OCI-LY7 (cell line): ENCODE measurements at regions of chrX and their contacts with region 1.

Region 1: DNA sequence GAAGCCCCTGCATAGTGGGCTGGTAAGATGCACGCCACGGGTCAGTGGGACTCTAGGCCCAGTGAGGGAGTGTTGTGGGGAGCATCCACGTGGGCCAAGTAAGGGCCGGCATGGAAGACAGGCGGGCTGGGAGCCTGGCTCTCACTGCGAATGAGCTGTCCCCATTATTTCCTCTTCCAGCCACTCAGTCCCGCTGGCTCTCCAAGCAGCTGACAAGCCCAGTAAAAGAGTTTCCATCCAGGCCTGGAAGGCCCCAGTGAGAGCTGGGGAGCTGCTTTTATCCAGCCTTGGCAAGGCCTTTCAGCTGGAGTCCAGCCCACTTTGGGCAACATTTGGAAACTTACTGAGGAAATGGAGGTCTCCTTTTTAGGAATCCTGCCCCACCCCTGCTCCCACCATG is 24.9 kb downstream of the APLN start:
- DNase-seq: no peak
- H3K4me3 ChIP-seq: no peak overlapping the region
- H3K27ac ChIP-seq: no peak overlapping the region
- H3K4me1 ChIP-seq: no peaks in the 10 kb centered on the region
- CTCF ChIP-seq: no peak

Region 2: GRCh38 chrX:129614481-129615255 is 15.2 kb before region 1 on chrX:
- CTCF ChIA-PET with region 1: no interaction called
- POLR2A ChIA-PET with region 1: no interaction called
- intact Hi-C with region 1: loop called (anchors 1 kb)
- DNase-seq: no peak
- H3K4me3 ChIP-seq: no peak overlapping the region
- H3K27ac ChIP-seq: no peak overlapping the region
- H3K4me1 ChIP-seq: no peaks in the 10 kb centered on the region
- CTCF ChIP-seq: no peak